Breast epithelium (tissue), 4 donors: ENCODE measurements at regions of chr12 and their contacts with region 1.

Region 1: DNA sequence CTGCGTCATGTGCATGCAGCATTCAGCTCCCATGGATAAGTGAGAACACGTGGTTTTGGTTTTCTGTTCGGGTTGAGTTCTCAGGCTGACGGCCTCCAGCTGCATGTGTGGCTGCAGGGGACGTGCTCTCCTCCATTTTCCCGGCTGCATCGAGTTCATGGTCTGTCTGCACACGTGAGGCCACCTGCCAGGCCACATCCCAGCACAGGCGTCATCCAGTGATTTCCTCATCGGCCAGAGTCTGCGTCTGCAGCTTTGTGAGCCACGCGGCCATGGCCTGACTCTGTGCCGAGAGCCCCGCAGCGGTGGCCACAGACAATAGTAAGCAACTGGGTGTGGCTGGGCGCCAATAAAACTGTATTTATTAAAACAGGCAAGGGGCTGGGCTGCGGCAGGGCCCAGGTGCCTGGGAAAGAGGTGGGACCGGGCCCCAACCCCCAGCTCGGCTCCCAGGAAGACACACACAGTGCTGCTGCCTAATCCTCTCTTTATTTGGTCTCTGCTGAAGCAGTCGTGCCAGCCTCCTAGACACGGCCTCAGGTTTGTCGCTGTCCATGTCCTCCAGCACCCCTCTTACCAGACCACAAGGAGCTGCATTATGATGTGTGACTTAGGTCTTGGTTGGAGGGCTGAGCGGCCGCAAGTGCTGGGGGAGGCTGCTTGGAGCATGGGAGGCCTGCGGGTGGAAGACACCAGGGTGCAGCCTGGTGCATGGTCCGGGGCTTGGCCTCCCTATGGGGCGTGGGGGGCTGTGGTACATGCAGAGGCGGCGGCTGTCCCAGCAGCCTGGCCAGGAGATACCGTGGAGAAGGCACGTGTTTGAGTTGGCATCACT is 52.0 kb downstream of the NOC4L start:
- DNase-seq: no peak
- H3K4me3 ChIP-seq: no peak overlapping the region
- H3K27ac ChIP-seq: no peak overlapping the region
- H3K4me1 ChIP-seq: no peaks in the 10 kb centered on the region
- H3K27me3 ChIP-seq: peaks cover 0 to 13% of the 10 kb centered on the region in 2 donors
- CTCF ChIP-seq: no peak
- POLR2A ChIP-seq: no peak

Region 2: GRCh38 chr12:130925666-130926015 is 1270.6 kb before region 1 on chr12:
- intact Hi-C with region 1: loop called (anchors 5 kb)
- DNase-seq: no peak
- H3K4me3 ChIP-seq: no peak overlapping the region
- H3K27ac ChIP-seq: no peak overlapping the region
- H3K4me1 ChIP-seq: no peaks in the 10 kb centered on the region
- H3K27me3 ChIP-seq: peaks cover 0 to 14% of the 10 kb centered on the region in 2 donors
- CTCF ChIP-seq: no peak
- POLR2A ChIP-seq: no peak

Region 3: GRCh38 chr12:132266802-132267201 is 70.5 kb after region 1 on chr12:
- intact Hi-C with region 1: loop called (anchors 2 kb)
- DNase-seq: no peak
- H3K4me3 ChIP-seq: no peak overlapping the region
- H3K27ac ChIP-seq: no peak overlapping the region
- H3K4me1 ChIP-seq: no peaks in the 10 kb centered on the region
- H3K27me3 ChIP-seq: peaks cover 0 to 90% of the 10 kb centered on the region in 2 donors
- CTCF ChIP-seq: no peak
- POLR2A ChIP-seq: no peak